ENCODE measurements at regions of chr17 and their contacts with region 1.

Region 1: DNA sequence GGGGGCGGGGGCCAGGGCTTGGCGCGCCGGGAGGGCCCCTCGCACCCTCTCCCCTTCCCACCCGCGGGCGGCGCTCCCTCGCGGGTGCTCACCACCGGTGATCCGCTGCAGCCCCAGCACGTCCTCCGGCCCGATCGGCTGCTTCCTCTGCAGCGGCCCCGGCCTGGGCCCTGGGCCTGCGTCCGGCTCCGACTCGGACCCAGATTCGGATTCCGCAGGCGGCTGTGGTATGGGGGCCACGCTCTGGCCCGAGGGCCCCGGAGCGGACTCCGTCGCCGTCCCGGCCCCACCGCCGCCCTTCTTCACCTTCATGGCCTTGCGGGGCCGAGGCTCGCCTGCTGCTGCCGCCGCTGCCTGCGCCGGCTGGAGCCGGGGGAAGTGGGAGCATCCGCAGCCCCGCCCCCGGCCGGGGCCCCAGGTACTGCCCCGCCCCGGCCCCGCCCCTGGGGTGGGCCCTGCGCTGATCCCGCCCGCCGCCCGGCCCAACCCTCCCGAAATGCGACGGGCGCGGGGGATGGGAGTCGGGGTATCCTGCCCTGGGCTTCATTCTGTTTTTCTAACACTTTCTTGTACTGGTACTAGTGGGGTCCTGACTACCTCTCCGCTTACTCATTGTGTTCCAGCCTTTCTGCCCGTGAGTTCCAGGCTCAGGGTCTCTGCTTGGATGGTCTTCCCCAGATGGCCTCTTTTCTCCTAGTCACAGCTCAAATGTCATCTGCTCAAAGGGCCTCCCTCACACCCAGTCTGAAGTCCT is at the start of gene UNC119:
- DNase-seq: peak; percentile 91
- ATAC-seq: peak; percentile 71
- H3K4me3 Mint-ChIP-seq: peak within 1 kb of the TSS; percentile 87
- H3K27ac Mint-ChIP-seq: peak within 1 kb of the TSS; percentile 70
- H3K4me1 Mint-ChIP-seq: peaks cover 52% of the 10 kb centered on the region
- H3K27me3 Mint-ChIP-seq: no peaks in the 10 kb centered on the region
- total RNA-seq, gene UNC119: 35.9 to 48.7 TPM

Region 2: DNA sequence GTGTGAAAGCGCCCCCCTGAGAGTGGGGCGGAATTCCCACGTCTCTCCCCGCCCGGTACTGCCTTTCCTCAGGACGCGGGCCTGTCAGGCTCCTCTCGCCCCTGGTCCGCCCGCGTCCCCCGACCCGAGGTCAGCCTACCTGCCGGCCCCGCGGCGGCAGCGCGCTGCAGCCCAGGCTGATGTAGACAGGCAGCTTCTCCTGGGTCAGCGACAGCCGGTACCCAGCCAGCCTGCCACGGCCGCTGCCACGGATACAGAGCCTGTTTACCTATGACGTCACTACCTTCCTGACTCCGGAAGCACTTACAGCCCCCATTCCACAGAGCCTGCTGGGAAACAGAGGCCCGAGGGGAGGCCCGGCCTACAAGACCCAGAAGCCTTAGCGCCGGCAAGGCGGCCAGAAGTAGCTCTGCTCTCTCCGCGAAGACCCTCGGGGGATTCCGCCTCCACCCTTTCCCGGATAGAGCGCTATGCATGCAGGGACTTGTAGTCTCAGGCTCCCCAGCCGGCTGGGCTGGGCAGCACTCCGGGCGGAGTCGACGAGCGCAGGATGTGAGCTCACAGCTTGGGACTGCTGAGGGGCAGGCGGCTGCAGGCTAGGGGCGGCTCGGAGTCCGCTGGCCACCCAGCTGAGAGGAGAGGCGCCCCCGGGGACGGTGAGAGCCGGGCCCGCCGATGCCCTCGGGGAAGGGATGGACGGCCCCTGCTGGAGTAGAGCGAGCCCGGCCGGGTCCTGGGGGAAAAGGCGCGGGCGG is 217.0 kb before region 1 on chr17 and contains the starts of genes IFT20 and TNFAIP1:
- CTCF ChIA-PET with region 1: no interaction called
- POLR2A ChIA-PET with region 1: no interaction called
- intact Hi-C with region 1: loop called in 1 of 2 experiments (anchors 1 kb)
- DNase-seq: peak; percentile 99
- ATAC-seq: peak; percentile 97
- H3K4me3 Mint-ChIP-seq: peak within 1 kb of the TSS; percentile 96
- H3K27ac Mint-ChIP-seq: peak within 1 kb of the TSS; percentile 91
- H3K4me1 Mint-ChIP-seq: peaks cover 36% of the 10 kb centered on the region
- H3K27me3 Mint-ChIP-seq: no peaks in the 10 kb centered on the region
- total RNA-seq, gene IFT20: 12.9 to 17.3 TPM
- total RNA-seq, gene TNFAIP1: 25.5 to 26.1 TPM

Region 3: DNA sequence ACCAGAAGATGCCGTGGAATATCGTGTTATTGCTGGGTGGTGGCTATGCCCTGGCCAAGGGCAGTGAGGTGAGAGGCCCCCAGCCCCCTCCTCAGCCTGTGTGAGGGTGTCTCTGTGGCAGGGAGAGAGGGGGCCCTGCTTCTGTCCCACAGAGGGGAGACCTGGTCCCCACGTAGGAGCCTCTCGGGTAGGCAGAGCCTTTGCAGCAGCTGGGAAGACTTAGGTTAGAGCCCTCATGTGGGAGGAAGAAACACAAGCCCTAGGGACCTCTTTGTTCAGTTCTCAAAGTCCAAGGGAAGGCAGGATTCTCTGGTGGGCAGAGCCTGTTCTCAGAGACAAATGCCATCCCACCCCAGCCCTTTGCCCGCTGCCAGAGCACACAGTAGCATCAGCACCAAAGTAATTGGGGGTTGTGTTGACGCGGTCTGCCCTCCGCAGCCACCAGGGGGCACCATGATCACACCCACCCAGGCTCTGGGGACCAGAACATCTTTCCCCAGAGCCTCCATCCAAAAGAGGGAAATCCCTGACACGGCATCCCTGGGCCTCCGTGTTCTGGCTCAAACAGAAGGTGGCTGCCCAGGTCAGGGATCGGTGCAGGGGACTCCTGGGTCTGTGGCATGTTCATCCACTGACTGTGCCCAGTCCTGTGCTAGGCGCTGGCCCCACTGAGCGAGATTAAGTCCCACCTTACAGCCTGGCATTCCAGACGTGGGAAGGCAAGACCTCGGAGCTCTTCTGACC is 57.8 kb before region 1 on chr17:
- CTCF ChIA-PET with region 1: interaction called, 4 read pairs
- POLR2A ChIA-PET with region 1: no interaction called
- intact Hi-C with region 1: loop called in 1 of 2 experiments (anchors 2 kb)
- DNase-seq: peak; percentile 90
- ATAC-seq: peak; percentile 92
- H3K4me3 Mint-ChIP-seq: no peak overlapping the region
- H3K27ac Mint-ChIP-seq: no peak overlapping the region
- H3K4me1 Mint-ChIP-seq: no peaks in the 10 kb centered on the region
- H3K27me3 Mint-ChIP-seq: peaks cover 5% of the 10 kb centered on the region

Region 4: DNA sequence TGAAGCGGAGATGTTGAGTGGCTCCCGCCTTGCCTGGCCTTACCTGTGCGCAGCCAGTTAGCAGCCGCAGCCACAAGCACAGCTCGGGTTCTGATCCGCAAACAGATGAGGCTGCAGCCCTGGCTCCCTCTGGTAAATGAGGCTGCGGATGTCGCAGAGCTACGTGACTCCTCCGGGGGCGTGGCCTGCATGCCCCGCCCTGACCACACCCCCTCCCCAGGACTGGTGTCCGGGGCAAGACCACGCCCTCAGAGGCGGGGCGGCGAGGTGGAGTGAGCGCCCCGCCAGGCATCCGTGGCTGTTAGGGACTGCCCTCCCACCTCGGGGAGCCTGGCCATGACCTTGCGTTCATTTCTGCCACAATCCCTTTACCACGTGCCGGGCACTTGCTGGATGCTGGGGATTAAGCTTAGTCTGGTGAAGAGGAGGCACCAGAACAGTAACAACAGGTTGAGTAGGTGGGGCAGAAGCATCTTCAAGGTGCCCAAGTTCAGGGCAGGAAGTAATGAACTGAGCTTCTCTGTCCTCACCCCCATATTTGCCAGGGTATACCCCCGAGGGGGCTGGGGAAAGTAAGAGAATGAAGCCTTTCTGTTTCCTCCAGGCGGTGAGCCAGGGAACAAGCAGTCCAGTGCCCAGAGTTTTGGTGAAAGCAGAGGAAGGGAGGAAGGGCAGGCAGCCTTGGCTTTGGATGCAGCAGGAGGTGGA is 24.5 kb after region 1 on chr17 and contains the start of gene ALDOC:
- CTCF ChIA-PET with region 1: interaction called, 38 read pairs
- POLR2A ChIA-PET with region 1: interaction called, 5 read pairs
- intact Hi-C with region 1: loop called in 1 of 2 experiments (anchors 1 kb)
- DNase-seq: peak; percentile 99
- ATAC-seq: peak; percentile 92
- H3K4me3 Mint-ChIP-seq: peak within 1 kb of the TSS; percentile 87
- H3K27ac Mint-ChIP-seq: peak within 1 kb of the TSS; percentile 82
- H3K4me1 Mint-ChIP-seq: peaks cover 43% of the 10 kb centered on the region
- H3K27me3 Mint-ChIP-seq: no peaks in the 10 kb centered on the region
- total RNA-seq, gene ALDOC: 131 to 133 TPM

Region 5: DNA sequence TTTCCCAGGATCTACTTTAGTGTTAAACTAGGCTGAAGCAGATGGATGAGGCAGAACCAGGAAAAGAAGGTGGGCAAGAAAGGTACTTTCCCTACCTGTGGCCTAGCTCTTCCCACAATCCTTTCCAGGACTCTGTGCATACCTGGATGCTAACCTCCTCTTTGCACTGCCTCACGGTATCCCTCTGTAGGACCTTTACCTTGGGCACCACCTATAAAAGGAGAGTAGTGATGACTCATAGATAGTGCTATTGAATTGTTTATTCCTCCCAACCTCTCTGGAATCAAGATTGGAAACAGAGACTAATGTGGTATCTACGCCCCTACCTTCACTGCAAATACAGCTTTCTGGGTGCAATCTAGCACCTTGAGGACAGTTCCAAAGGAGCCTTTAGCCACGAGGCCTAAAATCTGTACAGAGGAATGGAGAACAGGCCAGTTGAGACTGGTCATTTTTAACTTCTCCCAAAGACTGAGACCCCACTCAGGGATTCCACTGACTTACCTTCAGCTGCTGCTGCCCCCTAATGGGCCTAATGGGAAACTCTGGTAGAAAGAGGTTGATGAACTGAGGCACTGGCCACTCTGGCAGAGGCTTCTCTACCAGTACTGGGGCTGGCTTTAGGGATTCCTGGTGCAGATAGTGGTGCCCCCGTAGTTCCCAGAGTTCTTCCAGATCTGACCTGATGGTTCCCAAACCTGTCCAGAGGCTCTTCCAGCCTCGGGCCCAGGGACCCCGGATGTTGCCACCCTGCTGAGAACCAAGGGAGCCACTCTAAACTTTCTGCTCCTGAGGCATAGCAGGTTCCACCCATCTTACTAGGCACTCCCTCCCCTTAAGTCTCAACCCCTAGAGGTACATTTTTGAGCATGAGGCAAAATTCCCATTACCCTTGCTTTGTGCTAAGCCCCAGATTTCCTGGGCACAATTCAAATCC is 60.8 kb after region 1 on chr17:
- CTCF ChIA-PET with region 1: interaction called, 8 read pairs
- POLR2A ChIA-PET with region 1: no interaction called
- intact Hi-C with region 1: loop called in 1 of 2 experiments (anchors 2 kb)
- DNase-seq: peak; percentile 51
- ATAC-seq: peak; percentile 69
- H3K4me3 Mint-ChIP-seq: no peak overlapping the region
- H3K27ac Mint-ChIP-seq: no peak overlapping the region
- H3K4me1 Mint-ChIP-seq: peaks cover 3% of the 10 kb centered on the region
- H3K27me3 Mint-ChIP-seq: no peaks in the 10 kb centered on the region

Region 6: GRCh38 chr17:28743225-28744103 is 191.0 kb after region 1 on chr17 and contains the start of gene TRAF4:
- CTCF ChIA-PET with region 1: no interaction called
- POLR2A ChIA-PET with region 1: no interaction called
- intact Hi-C with region 1: no loop called
- DNase-seq: peak; percentile 89
- ATAC-seq: peak; percentile 91
- H3K4me3 Mint-ChIP-seq: peak within 1 kb of the TSS; percentile 87
- H3K27ac Mint-ChIP-seq: peak within 1 kb of the TSS; percentile 92
- H3K4me1 Mint-ChIP-seq: peaks cover 42% of the 10 kb centered on the region
- H3K27me3 Mint-ChIP-seq: no peaks in the 10 kb centered on the region
- total RNA-seq, gene TRAF4: 96.5 to 117 TPM

Measured in activated CD4-positive, alpha-beta T cell treated with anti-CD3 and anti-CD28 coated beads for 36 hours (primary cell).